ENCODE measurements at regions of chr4 and their contacts with region 1.

Region 1: GRCh38 chr4:52659001-52659721 is at the start of gene USP46:
- DNase-seq: peak; percentile 82
- H3K4me3 ChIP-seq: peak within 1 kb of the TSS; percentile 65 to 99 (median 89)
- H3K27ac ChIP-seq: peak within 1 kb of the TSS; percentile 94 to 98 (median 98)
- H3K4me1 ChIP-seq: peaks cover 0 to 30% (median 9%) of the 10 kb centered on the region in 4 donors
- H3K27me3 ChIP-seq: no peaks in the 10 kb centered on the region
- CTCF ChIP-seq: no peak
- EP300 ChIP-seq: no peak
- POLR2A ChIP-seq: no peak
- total RNA-seq, gene USP46: 6.0 to 7.6 (median 6.8) TPM

Region 2: GRCh38 chr4:52572936-52573485 is 86.2 kb before region 1 on chr4:
- in situ Hi-C with region 1: loop called in 1 of 4 experiments (anchors 25 kb)
- intact Hi-C with region 1: no loop called
- DNase-seq: no peak
- H3K4me3 ChIP-seq: no peak overlapping the region
- H3K27ac ChIP-seq: no peak overlapping the region
- H3K4me1 ChIP-seq: peaks cover 0 to 5% (median 0%) of the 10 kb centered on the region in 4 donors
- H3K27me3 ChIP-seq: no peaks in the 10 kb centered on the region
- CTCF ChIP-seq: no peak
- EP300 ChIP-seq: no peak
- POLR2A ChIP-seq: no peak

Region 3: GRCh38 chr4:52721968-52722815 is 63.0 kb after region 1 on chr4:
- in situ Hi-C with region 1: no loop called
- intact Hi-C with region 1: loop called (anchors 5 kb)
- DNase-seq: peak; percentile 94
- H3K4me3 ChIP-seq: peak overlapping the region; percentile 57 to 89 (median 70)
- H3K27ac ChIP-seq: peak overlapping the region; percentile 87 to 91 (median 88)
- H3K4me1 ChIP-seq: peaks cover 0 to 10% (median 5%) of the 10 kb centered on the region in 4 donors
- H3K27me3 ChIP-seq: no peaks in the 10 kb centered on the region
- CTCF ChIP-seq: peak in 1 of 5 experiments; percentile 17
- EP300 ChIP-seq: no peak
- POLR2A ChIP-seq: peak; percentile 70

Region 4: GRCh38 chr4:54254116-54254914 is 1595.2 kb after region 1 on chr4:
- in situ Hi-C with region 1: no loop called
- intact Hi-C with region 1: no loop called
- DNase-seq: no peak
- H3K4me3 ChIP-seq: no peak overlapping the region
- H3K27ac ChIP-seq: no peak overlapping the region
- H3K4me1 ChIP-seq: no peaks in the 10 kb centered on the region
- H3K27me3 ChIP-seq: no peaks in the 10 kb centered on the region
- CTCF ChIP-seq: no peak
- EP300 ChIP-seq: no peak
- POLR2A ChIP-seq: no peak